Activated T-helper 2 cell treated with anti-CD3 and anti-CD28 coated beads, Interferon-gamma antibody, Interleukin-2, Interleukin-4, amounts not matched to agents 10 μg/mL and 5 μg/mL and 100 μg/mL, durations not matched to agents 14 hours and 24 hours and 36 hours (primary cell): ENCODE measurements at regions of chr19 and their contacts with region 1.

Region 1: GRCh38 chr19:3146677-3147100 is 10.9 kb downstream of the GNA15 start:
- DNase-seq: peak; percentile 45
- H3K4me3 Mint-ChIP-seq: no peak overlapping the region
- H3K27ac Mint-ChIP-seq: peak overlapping the region; percentile 3
- H3K4me1 Mint-ChIP-seq: peaks cover 32% of the 10 kb centered on the region
- H3K27me3 Mint-ChIP-seq: no peaks in the 10 kb centered on the region

Region 2: GRCh38 chr19:3163230-3163886 is 16.7 kb after region 1 on chr19:
- intact Hi-C with region 1: loop called (anchors 1 kb)
- DNase-seq: peak; percentile 56
- H3K4me3 Mint-ChIP-seq: no peak overlapping the region
- H3K27ac Mint-ChIP-seq: no peak overlapping the region
- H3K4me1 Mint-ChIP-seq: peaks cover 30% of the 10 kb centered on the region
- H3K27me3 Mint-ChIP-seq: no peaks in the 10 kb centered on the region